Caco-2 (cell line): ENCODE measurements at regions of chr17 and their contacts with region 1.

Region 1: GRCh38 chr17:41231731-41232130 is 518 bp upstream of the KRTAP9-3 start:
- DNase-seq: no peak
- H3K4me3 ChIP-seq: no peak overlapping the region
- H3K4me3 Mint-ChIP-seq: no peak overlapping the region
- H3K27ac Mint-ChIP-seq: no peak overlapping the region
- H3K4me1 ChIP-seq: no peaks in the 10 kb centered on the region
- H3K4me1 Mint-ChIP-seq: no peaks in the 10 kb centered on the region
- H3K27me3 ChIP-seq: no peaks in the 10 kb centered on the region
- H3K27me3 Mint-ChIP-seq: peaks cover 4% of the 10 kb centered on the region
- CTCF ChIP-seq: no peak

Region 2: GRCh38 chr17:41153856-41154255 is 77.9 kb before region 1 on chr17:
- CTCF ChIA-PET with region 1: no interaction called
- POLR2A ChIA-PET with region 1: no interaction called
- intact Hi-C with region 1: no loop called
- DNase-seq: no peak
- H3K4me3 ChIP-seq: no peak overlapping the region
- H3K4me3 Mint-ChIP-seq: no peak overlapping the region
- H3K27ac Mint-ChIP-seq: no peak overlapping the region
- H3K4me1 ChIP-seq: no peaks in the 10 kb centered on the region
- H3K4me1 Mint-ChIP-seq: no peaks in the 10 kb centered on the region
- H3K27me3 ChIP-seq: no peaks in the 10 kb centered on the region
- H3K27me3 Mint-ChIP-seq: no peaks in the 10 kb centered on the region
- CTCF ChIP-seq: no peak

Region 3: GRCh38 chr17:41777574-41778188 is 546.0 kb after region 1 on chr17:
- CTCF ChIA-PET with region 1: no interaction called
- POLR2A ChIA-PET with region 1: interaction called, 10 read pairs
- intact Hi-C with region 1: no loop called
- DNase-seq: no peak
- H3K4me3 ChIP-seq: no peak overlapping the region
- H3K4me3 Mint-ChIP-seq: no peak overlapping the region
- H3K27ac Mint-ChIP-seq: no peak overlapping the region
- H3K4me1 ChIP-seq: peaks cover 74% of the 10 kb centered on the region
- H3K4me1 Mint-ChIP-seq: peaks cover 37% of the 10 kb centered on the region
- H3K27me3 ChIP-seq: no peaks in the 10 kb centered on the region
- H3K27me3 Mint-ChIP-seq: no peaks in the 10 kb centered on the region
- CTCF ChIP-seq: no peak